H1 (cell line): ENCODE measurements at regions of chr21 and their contacts with region 1.

Region 1: DNA sequence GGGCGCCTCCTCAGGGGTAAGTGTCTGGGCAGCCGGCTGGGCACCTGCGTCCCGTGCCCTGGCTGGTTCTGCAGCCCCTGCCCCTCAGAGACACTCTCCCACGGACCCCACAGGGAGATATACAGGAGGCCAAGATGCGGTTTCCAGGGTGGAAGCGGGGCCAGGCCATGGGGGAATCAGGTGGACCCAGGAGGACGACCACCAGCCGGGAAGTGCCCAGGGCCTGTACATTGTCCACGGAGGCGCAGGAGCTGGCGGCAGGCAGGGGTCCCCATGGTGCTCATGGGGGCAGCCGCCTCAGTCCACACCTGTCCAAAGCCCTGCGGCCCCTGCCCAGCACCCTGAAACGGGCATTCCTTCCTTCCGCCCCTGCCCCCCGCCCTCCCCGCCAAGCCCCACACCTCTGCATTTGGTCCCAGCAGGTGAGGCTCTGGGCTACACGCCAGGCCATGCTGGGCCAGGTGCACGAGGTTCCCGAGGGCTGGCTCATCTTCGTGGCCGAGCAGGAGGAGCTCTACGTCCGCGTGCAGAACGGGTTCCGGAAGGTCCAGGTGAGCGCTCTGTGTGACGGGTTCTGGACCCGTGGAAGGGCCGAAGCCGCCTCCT is 36.7 kb downstream of the SLC19A1 start:
- DNase-seq: no peak
- H3K4me3 ChIP-seq: no peak overlapping the region
- H3K27ac ChIP-seq: no peak overlapping the region
- H3K4me1 ChIP-seq: no peaks in the 10 kb centered on the region; a peak in 1 of 7 replicates
- H3K27me3 ChIP-seq: no peaks in the 10 kb centered on the region
- CTCF ChIP-seq: no peak
- EP300 ChIP-seq: no peak
- POLR2A ChIP-seq: no peak
- RAD21 ChIP-seq: no peak

Region 2: GRCh38 chr21:45517249-45518065 is 11.9 kb after region 1 on chr21:
- CTCF ChIA-PET with region 1: no interaction called
- POLR2A ChIA-PET with region 1: interaction called, 11 read pairs
- DNase-seq: no peak
- H3K4me3 ChIP-seq: no peak overlapping the region
- H3K27ac ChIP-seq: no peak overlapping the region
- H3K4me1 ChIP-seq: no peaks in the 10 kb centered on the region
- H3K27me3 ChIP-seq: no peaks in the 10 kb centered on the region
- CTCF ChIP-seq: no peak
- EP300 ChIP-seq: no peak
- POLR2A ChIP-seq: no peak
- RAD21 ChIP-seq: no peak